Activated CD8-positive, alpha-beta T cell treated with anti-CD3 and anti-CD28 coated beads, Interleukin-2, amount 10 ng/mL, durations not matched to agents 7 days and 5 days (primary cell): ENCODE measurements at regions of chr22 and their contacts with region 1.

Region 1: DNA sequence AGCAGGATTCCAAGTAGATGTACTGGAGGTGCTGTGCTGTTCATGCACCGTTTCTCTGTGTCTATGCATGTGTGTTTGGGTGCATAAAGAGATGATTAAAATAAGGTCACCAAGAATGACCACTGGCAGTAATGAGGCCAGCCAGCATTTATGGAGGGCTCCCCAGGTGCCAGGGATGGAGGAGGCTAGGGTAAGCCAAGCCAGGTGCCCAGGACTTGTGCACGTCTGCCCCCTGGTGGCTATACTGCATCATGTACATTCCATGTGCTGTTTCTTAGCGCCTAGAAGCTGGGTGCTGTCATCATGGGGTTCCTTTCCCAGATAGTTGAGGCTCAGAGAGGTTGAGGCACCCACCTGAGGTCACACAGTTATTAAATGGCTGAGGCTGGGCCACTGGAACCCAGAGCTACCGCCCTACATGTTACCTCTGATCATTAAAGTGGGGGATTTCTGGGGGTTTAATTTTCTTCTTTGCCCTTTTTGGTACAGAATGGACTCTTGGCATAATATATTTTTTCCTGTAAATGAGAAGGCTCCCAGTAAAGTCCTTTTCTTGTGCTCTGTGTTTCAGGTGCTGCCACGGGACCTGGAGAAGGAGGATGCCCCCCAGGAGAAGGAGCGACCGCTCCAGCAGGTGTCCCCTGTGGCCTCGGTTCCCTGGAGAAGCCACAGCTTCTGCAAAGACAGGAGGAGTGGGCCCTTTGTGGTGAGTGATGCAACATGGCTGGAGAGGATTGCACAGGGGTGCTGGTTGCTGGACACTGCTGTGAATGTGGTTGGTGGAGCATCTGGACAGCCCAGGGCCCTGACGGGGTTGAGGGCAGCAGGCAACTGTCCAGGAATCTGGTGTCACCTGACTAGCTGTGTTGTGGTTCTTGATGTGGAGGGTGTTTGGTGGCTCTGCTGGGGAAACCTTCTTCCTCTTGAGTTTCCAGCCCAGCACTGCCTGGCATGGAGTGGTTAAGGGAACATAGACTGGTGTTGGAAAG is 96.4 kb downstream of the KIAA1671 start:
- DNase-seq: peak; percentile 83
- ATAC-seq: peak; percentile 98
- H3K4me3 Mint-ChIP-seq: no peak overlapping the region
- H3K27ac Mint-ChIP-seq: no peak overlapping the region
- H3K4me1 Mint-ChIP-seq: no peaks in the 10 kb centered on the region
- H3K27me3 Mint-ChIP-seq: no peaks in the 10 kb centered on the region

Region 2: GRCh38 chr22:24938741-24939341 is 110.1 kb before region 1 on chr22:
- CTCF ChIA-PET with region 1: interaction called, 111 read pairs
- POLR2A ChIA-PET with region 1: no interaction called
- DNase-seq: peak; percentile 43
- ATAC-seq: peak; percentile 36
- H3K4me3 Mint-ChIP-seq: no peak overlapping the region
- H3K27ac Mint-ChIP-seq: no peak overlapping the region
- H3K4me1 Mint-ChIP-seq: no peaks in the 10 kb centered on the region
- H3K27me3 Mint-ChIP-seq: no peaks in the 10 kb centered on the region

Region 3: GRCh38 chr22:24961217-24961844 is 87.6 kb before region 1 on chr22:
- CTCF ChIA-PET with region 1: interaction called, 11 read pairs
- POLR2A ChIA-PET with region 1: no interaction called
- DNase-seq: no peak
- ATAC-seq: no peak
- H3K4me3 Mint-ChIP-seq: no peak overlapping the region
- H3K27ac Mint-ChIP-seq: no peak overlapping the region
- H3K4me1 Mint-ChIP-seq: peaks cover 2% of the 10 kb centered on the region
- H3K27me3 Mint-ChIP-seq: peaks cover 5% of the 10 kb centered on the region

Region 4: GRCh38 chr22:25067851-25068421 is 19.0 kb after region 1 on chr22:
- CTCF ChIA-PET with region 1: interaction called, 23 read pairs
- POLR2A ChIA-PET with region 1: interaction called, 4 read pairs
- DNase-seq: peak; percentile 93
- ATAC-seq: peak; percentile 89
- H3K4me3 Mint-ChIP-seq: peak overlapping the region; percentile 80
- H3K27ac Mint-ChIP-seq: peak overlapping the region; percentile 95
- H3K4me1 Mint-ChIP-seq: peaks cover 92% of the 10 kb centered on the region
- H3K27me3 Mint-ChIP-seq: no peaks in the 10 kb centered on the region